ENCODE measurements at regions of chr7 and their contacts with region 1.

Region 1: DNA sequence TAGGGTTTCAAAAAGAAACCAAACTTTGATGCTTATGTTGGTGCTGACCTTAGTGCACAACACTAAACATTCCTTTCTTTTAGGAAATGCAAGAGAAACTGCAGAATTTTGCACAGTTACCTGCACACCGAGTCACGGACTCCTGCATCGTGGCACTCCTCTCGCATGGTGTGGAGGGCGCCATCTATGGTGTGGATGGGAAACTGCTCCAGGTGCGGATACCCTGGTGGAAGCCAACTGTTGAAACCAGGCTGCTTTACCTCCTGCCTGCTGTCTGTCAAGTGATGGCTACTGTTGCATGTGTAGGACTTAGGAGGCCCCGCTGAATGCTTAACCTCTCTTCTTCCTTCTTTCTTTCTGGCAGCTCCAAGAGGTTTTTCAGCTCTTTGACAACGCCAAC is 11.7 kb downstream of the CASP2 start:
- DNase-seq: no peak
- H3K4me3 ChIP-seq: no peak overlapping the region
- CTCF ChIP-seq: peak; percentile 37

Region 2: GRCh38 chr7:142889816-142890215 is 410.0 kb before region 1 on chr7:
- CTCF ChIA-PET with region 1: no interaction called
- POLR2A ChIA-PET with region 1: no interaction called
- DNase-seq: no peak
- H3K4me3 ChIP-seq: no peak overlapping the region
- CTCF ChIP-seq: no peak

Region 3: GRCh38 chr7:143287935-143288826 is 11.7 kb before region 1 on chr7 and contains the start of gene CASP2:
- CTCF ChIA-PET with region 1: interaction called, 18 read pairs
- POLR2A ChIA-PET with region 1: interaction called, 4 read pairs
- DNase-seq: peak; percentile 63
- H3K4me3 ChIP-seq: peak within 1 kb of the TSS; percentile 88
- CTCF ChIP-seq: peak; percentile 48